Activated CD4-positive, alpha-beta T cell treated with anti-CD3 and anti-CD28 coated beads, Interleukin-2, amount 10 ng/mL, durations not matched to agents 24 days and 14 days (primary cell): ENCODE measurements at regions of chr12 and their contacts with region 1.

Region 1: GRCh38 chr12:112096667-112097066 is 11.9 kb downstream of the NAA25 start:
- DNase-seq: peak; percentile 61
- H3K4me3 Mint-ChIP-seq: peak overlapping the region; percentile 56
- H3K27ac Mint-ChIP-seq: peak overlapping the region; percentile 90
- H3K4me1 Mint-ChIP-seq: peaks cover 34% of the 10 kb centered on the region
- H3K27me3 Mint-ChIP-seq: no peaks in the 10 kb centered on the region

Region 2: DNA sequence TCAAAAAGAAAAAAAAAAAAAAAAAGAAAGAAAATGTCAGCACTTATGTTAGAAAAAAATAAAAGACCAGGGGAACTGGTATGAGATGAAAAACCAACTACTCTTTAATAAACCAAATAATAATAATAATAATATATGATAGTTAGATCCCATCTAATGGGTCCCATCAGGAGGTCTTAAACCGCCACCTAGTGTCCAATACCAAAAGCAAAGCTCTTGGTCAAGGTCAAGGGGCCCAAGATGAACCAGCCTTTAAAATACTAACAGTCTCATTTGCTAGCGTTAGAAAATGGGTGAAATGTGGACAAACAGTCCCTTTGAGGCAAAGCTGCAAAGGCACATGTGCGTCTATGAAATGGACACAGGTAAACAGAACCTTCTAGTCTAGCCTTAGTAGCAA is 423.2 kb before region 1 on chr12:
- intact Hi-C with region 1: no loop called
- DNase-seq: no peak
- H3K4me3 Mint-ChIP-seq: no peak overlapping the region
- H3K27ac Mint-ChIP-seq: no peak overlapping the region
- H3K4me1 Mint-ChIP-seq: no peaks in the 10 kb centered on the region
- H3K27me3 Mint-ChIP-seq: no peaks in the 10 kb centered on the region

Region 3: GRCh38 chr12:112125250-112125999 is 28.8 kb after region 1 on chr12 and contains the start of gene TRAFD1:
- intact Hi-C with region 1: loop called (anchors 1 kb)
- DNase-seq: peak; percentile 100
- H3K4me3 Mint-ChIP-seq: peak within 1 kb of the TSS; percentile 82
- H3K27ac Mint-ChIP-seq: peak within 1 kb of the TSS; percentile 88
- H3K4me1 Mint-ChIP-seq: peaks cover 32% of the 10 kb centered on the region
- H3K27me3 Mint-ChIP-seq: peaks cover 4% of the 10 kb centered on the region
- total RNA-seq, gene TRAFD1: 45.6 and 48.3 TPM in 2 replicates

Region 4: DNA sequence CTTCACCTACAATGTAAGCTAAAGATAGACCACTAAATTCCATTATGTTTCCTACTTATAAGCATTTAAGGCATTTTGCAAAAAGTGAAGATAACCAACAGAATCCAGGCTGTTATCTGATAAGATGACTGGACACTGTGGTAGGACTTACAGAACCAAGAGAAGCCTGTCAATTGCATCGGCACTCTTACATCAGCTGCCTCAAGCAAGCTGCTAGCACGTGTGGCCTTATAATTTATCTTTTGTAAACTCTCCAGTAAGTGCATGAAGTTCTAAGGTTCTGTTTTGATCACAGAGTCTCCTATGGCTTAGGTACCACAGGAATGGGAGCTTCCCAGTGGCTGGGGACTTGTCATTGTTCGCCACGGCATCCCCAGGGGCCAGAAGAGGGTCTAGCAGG is 117.4 kb after region 1 on chr12:
- intact Hi-C with region 1: no loop called
- DNase-seq: no peak
- H3K4me3 Mint-ChIP-seq: no peak overlapping the region
- H3K27ac Mint-ChIP-seq: no peak overlapping the region
- H3K4me1 Mint-ChIP-seq: no peaks in the 10 kb centered on the region
- H3K27me3 Mint-ChIP-seq: no peaks in the 10 kb centered on the region